ENCODE measurements at regions of chr1 and their contacts with region 1.

Region 1: GRCh38 chr1:21956720-21957552 is 19.8 kb upstream of the HSPG2 start:
- DNase-seq: peak; percentile 59 to 82 (median 79)
- H3K4me3 ChIP-seq: no peak overlapping the region
- H3K27ac ChIP-seq: peak overlapping the region in 1 of 5 donors; percentile 6
- H3K4me1 ChIP-seq: peaks cover 9 to 15% of the 10 kb centered on the region in 2 donors
- H3K27me3 ChIP-seq: no peaks in the 10 kb centered on the region
- CTCF ChIP-seq: no peak
- POLR2A ChIP-seq: no peak

Region 2: DNA sequence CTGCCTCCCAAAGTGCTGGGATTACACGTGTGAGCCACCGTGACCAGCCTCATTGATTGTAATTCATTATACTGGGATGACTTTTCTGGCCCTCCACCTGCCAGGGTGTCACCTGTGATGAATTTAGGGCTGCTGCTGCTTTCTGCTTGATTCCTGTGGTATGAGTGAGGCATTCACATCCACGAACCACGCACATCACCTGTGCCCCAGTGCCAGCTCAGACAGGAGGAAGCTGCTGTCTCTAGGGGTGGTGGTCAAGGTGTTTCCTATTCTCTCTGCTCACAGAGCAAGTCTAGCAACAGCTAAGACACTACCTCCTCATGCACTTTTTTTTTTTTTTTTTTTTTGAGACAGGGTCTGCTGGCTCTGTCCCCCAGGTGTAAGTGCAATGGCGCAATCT is 157.2 kb before region 1 on chr1:
- intact Hi-C with region 1: loop called in 1 of 2 experiments (anchors 10 kb)
- DNase-seq: no peak
- H3K4me3 ChIP-seq: no peak overlapping the region
- H3K27ac ChIP-seq: no peak overlapping the region
- H3K4me1 ChIP-seq: peaks cover 0 to 7% of the 10 kb centered on the region in 2 donors
- H3K27me3 ChIP-seq: no peaks in the 10 kb centered on the region
- CTCF ChIP-seq: no peak
- POLR2A ChIP-seq: no peak

Region 3: DNA sequence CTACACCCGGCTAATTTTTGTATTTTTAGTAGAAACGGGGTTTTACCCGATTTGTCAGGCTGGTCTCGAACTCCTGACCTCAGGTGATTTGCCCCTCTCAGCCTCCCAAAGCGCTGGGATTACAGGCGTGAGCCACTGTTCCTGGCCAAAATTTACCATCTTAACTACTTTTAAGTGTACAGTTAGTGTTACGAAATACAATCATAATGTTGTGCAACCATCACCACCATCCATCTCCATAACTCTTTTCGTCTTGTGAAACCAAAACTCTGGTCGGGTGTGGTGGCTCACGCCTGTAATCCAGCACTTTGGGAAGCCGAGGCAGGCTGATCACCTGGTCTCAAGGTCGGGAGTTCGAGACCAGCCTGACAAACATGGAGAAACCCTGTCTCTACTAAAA is 480.6 kb after region 1 on chr1:
- intact Hi-C with region 1: no loop called
- DNase-seq: no peak
- H3K4me3 ChIP-seq: no peak overlapping the region
- H3K27ac ChIP-seq: no peak overlapping the region
- H3K4me1 ChIP-seq: no peaks in the 10 kb centered on the region
- H3K27me3 ChIP-seq: no peaks in the 10 kb centered on the region
- CTCF ChIP-seq: no peak
- POLR2A ChIP-seq: no peak

Measured in adrenal gland (tissue), 19 donors.